Calu3 (cell line): ENCODE measurements at regions of chr12 and their contacts with region 1.

Region 1: GRCh38 chr12:91811481-91812287 is 334.0 kb downstream of the BTG1 start:
- DNase-seq: peak; percentile 82
- H3K4me3 Mint-ChIP-seq: no peak overlapping the region
- H3K27ac Mint-ChIP-seq: no peak overlapping the region
- H3K4me1 Mint-ChIP-seq: no peaks in the 10 kb centered on the region
- H3K27me3 Mint-ChIP-seq: no peaks in the 10 kb centered on the region
- CTCF ChIP-seq: peak; percentile 90

Region 2: GRCh38 chr12:91478500-91478899 is 333.2 kb before region 1 on chr12:
- CTCF ChIA-PET with region 1: no interaction called
- intact Hi-C with region 1: no loop called
- DNase-seq: no peak
- H3K4me3 Mint-ChIP-seq: no peak overlapping the region
- H3K27ac Mint-ChIP-seq: no peak overlapping the region
- H3K4me1 Mint-ChIP-seq: no peaks in the 10 kb centered on the region
- H3K27me3 Mint-ChIP-seq: no peaks in the 10 kb centered on the region
- CTCF ChIP-seq: no peak

Region 3: GRCh38 chr12:91630596-91631293 is 180.9 kb before region 1 on chr12:
- CTCF ChIA-PET with region 1: no interaction called
- intact Hi-C with region 1: no loop called
- DNase-seq: no peak
- H3K4me3 Mint-ChIP-seq: no peak overlapping the region
- H3K27ac Mint-ChIP-seq: no peak overlapping the region
- H3K4me1 Mint-ChIP-seq: no peaks in the 10 kb centered on the region
- H3K27me3 Mint-ChIP-seq: no peaks in the 10 kb centered on the region
- CTCF ChIP-seq: no peak

Region 4: DNA sequence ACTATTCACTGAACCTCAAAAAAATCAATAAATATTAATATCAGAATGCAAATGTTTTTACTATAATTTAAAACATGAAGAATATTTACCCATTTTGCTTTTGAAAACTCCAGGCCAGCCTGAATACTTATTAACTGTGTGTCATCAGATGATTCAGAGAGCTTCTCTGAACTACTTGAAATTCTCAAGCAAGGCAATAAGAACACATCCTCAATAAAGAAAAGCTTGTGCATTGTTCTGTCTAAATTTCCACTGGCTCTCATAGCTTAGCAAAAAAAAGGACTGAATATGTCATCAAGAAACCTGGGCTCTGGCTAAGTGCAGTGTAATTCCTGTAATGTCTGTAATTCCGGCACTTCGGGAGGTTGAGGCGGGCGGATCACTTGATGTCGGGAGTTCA is 139.9 kb after region 1 on chr12:
- CTCF ChIA-PET with region 1: interaction called, 4 read pairs
- intact Hi-C with region 1: loop called (anchors 5 kb)
- DNase-seq: no peak
- H3K4me3 Mint-ChIP-seq: no peak overlapping the region
- H3K27ac Mint-ChIP-seq: peak overlapping the region; percentile 37
- H3K4me1 Mint-ChIP-seq: peaks cover 23% of the 10 kb centered on the region
- H3K27me3 Mint-ChIP-seq: no peaks in the 10 kb centered on the region
- CTCF ChIP-seq: no peak

Region 5: GRCh38 chr12:91991399-91992187 is 179.9 kb after region 1 on chr12:
- CTCF ChIA-PET with region 1: no interaction called
- intact Hi-C with region 1: loop called (anchors 10 kb)
- DNase-seq: no peak
- H3K4me3 Mint-ChIP-seq: no peak overlapping the region
- H3K27ac Mint-ChIP-seq: no peak overlapping the region
- H3K4me1 Mint-ChIP-seq: no peaks in the 10 kb centered on the region
- H3K27me3 Mint-ChIP-seq: no peaks in the 10 kb centered on the region
- CTCF ChIP-seq: no peak

Region 6: DNA sequence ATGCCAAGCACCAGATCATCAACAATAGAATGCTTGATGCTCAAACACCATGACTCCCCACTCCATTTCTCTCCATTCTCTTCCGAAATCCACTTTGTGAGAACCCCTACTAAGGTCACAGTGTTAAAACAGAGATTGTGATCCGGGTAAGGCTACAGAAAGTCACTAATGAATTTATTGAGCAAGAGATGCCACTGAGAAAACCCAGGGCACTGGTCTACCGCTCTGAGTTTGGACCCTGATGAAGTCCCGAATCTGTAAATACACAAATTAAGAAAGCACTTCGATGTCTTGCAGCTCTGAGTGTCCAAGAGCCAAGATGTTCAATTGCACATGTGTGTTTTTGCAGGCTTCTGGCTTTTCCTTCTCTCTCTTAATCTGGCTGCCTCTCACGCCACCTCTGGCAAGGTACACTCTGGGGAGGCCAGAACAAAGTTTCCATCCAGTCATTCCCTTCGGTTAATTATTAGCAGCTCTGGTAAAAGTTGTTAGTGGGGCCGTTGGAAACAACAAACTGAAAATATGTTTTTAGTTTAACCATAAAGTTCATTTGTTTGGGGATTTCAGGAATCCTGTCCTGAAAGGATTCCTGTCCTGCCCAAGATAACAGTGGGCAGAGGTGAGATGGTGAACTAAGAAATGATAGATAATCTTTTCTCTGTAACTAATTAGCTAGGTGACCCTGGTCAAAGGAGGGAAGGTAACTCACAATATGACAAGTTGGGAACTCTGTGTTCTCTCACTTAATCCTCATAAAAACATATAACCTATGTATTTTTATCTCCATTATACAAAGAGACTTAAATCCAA is 258.6 kb after region 1 on chr12:
- CTCF ChIA-PET with region 1: no interaction called
- intact Hi-C with region 1: loop called (anchors 2 kb)
- DNase-seq: peak; percentile 80
- H3K4me3 Mint-ChIP-seq: peak overlapping the region; percentile 54
- H3K27ac Mint-ChIP-seq: peak overlapping the region; percentile 91
- H3K4me1 Mint-ChIP-seq: peaks cover 56% of the 10 kb centered on the region
- H3K27me3 Mint-ChIP-seq: no peaks in the 10 kb centered on the region
- CTCF ChIP-seq: peak; percentile 15

Region 7: DNA sequence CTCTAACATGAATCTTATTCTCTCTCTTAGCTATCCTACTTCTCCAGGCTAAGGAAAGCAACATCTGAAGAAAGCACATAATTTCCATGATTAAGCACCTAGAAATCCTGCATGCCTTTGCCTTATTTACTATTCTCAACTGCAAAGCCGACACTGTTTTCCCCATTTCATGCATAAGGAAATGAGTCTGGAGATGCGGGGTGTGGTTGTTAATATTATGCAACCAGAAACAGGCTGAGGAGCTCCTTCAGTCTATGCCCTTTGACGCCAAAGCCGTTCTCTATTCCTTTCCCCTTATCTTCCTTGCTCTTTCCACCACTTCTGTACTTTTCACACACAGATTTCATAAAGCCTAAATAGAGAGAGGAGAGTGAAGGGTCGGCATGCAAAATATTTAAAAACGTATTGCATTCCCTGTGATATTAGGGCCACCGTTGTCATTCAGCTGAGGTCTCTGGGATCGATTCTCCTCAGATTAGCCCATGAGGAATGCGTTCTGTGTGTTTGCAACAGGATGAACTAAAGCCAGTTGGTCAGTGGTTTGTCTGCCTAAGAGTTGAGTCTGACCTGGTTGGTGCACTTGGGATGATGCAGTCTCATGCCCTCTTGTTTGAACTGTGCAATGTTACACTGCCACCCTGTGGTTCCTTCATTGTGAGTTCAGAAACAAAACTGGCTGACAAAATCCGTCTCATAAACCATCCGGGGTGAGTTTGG is 838.0 kb after region 1 on chr12:
- CTCF ChIA-PET with region 1: no interaction called
- intact Hi-C with region 1: loop called (anchors 5 kb)
- DNase-seq: peak; percentile 78
- H3K4me3 Mint-ChIP-seq: peak overlapping the region; percentile 54
- H3K27ac Mint-ChIP-seq: peak overlapping the region; percentile 71
- H3K4me1 Mint-ChIP-seq: peaks cover 47% of the 10 kb centered on the region
- H3K27me3 Mint-ChIP-seq: no peaks in the 10 kb centered on the region
- CTCF ChIP-seq: peak; percentile 63